ENCODE measurements at regions of chr18 and their contacts with region 1.

Region 1: DNA sequence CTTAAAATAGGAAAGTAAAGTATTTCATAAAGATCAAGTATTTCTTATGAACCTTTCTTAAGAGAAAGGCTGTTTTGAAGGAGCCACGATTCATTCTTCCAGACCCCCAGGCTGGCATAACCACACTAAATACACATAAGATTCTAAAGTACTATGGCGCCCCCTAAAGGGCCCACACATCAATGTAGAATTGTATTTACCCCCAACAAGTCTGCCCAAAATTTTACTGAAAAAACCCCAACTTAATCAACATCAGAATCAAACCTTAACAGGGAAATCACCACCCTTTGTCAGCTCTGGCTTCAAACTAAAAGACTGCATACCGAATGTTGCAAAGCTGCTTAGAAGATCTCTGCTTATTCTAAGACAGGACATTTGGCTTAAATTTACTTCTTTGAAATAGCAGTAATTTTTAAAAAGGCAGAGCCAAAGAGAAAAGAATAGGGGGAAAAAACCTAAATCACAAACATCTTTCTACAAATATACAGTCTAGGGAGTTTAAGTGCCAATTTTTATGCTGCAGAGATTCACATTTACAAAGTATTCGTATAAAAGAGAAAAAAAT is 20.4 kb upstream of the BCL2 start:
- DNase-seq: no peak
- ATAC-seq: no peak
- H3K4me3 ChIP-seq: no peak overlapping the region
- H3K27ac ChIP-seq: no peak overlapping the region
- H3K4me1 ChIP-seq: peaks cover 0 to 16% (median 7%) of the 10 kb centered on the region in 4 donors
- H3K27me3 ChIP-seq: no peaks in the 10 kb centered on the region
- CTCF ChIP-seq: peak; percentile 28 to 54 (median 48)
- POLR2A ChIP-seq: no peak

Region 2: DNA sequence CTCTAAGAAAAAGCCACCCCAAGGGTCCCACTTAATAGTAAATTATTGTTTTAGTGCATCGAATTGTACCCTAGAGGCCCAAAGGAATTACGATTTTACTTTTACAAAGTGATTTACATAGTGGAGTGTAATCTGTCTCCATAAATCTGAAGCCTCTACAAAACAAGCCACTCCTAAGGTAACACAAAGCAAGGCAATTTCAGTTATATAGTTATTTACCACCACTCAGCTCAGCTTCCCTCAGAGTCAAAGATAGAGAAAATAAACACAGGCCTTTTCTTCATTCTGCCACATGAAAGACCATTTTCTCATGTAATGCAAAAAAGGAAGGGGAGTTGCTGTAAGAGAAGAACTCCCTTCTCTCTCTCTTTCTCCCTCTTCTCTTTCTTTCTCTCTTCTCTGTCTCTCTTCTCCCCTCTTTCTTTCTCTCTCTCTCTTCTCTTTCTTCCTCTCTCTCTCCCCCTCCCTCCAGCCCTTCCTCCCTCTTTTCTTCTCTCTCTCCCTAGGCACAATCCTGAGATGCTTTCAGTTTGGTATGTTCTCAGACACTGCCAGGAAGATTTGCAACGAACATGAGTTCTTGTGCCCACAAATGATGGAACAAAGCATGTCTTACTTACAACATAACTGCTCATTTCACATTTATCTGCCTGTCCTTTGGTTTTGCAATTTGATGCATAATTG is 285.0 kb before region 1 on chr18:
- intact Hi-C with region 1: no loop called
- DNase-seq: no peak
- ATAC-seq: no peak
- H3K4me3 ChIP-seq: no peak overlapping the region
- H3K27ac ChIP-seq: no peak overlapping the region
- H3K4me1 ChIP-seq: no peaks in the 10 kb centered on the region
- H3K27me3 ChIP-seq: no peaks in the 10 kb centered on the region
- CTCF ChIP-seq: no peak
- POLR2A ChIP-seq: no peak

Region 3: DNA sequence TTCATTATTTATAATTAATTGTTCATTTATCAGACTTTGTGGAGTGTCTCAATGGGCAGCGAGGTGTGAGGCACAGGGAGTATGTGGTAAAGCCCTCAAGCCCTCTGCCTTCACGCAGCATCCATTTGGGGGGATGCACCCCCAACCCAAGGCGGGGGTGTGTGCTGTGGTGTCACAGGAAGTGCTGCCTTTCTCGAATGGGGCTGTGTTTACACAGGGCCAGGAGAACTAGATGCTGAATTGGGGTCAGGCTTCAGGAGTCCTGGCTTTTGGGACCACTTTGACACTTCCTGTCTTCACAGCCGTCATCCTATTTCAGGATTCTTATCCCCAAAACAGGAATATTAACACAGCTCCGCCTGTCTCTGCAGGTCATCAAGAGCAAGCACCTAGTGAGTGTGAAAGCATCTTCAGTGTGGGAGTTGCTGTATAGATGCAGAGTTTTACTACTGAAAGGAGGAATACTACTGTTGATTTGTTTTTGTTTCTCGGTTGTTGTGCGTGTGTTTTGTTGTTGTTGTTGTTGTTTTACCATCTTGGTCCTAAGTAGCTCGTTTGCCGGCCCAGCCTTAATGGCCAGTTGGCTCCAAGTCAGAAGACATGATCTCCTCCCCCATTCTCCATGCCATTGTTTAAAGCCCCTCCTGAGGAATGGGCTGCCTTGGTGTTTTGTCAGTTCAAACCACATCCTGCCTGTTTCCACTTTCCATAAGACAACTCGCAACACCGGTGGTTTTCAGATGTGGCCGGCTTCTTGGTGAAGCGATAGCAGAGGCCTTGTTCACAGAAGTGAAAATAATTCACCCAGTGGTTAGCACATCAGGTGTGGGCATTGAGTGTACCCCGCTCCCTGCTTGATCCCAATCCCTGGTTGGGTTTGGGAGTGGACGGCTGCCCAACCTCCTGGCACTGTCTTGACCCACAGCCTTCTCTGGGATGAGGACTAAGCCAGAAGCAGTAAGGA is 241.7 kb before region 1 on chr18:
- intact Hi-C with region 1: no loop called
- DNase-seq: no peak
- ATAC-seq: no peak
- H3K4me3 ChIP-seq: no peak overlapping the region
- H3K27ac ChIP-seq: no peak overlapping the region
- H3K4me1 ChIP-seq: peaks cover 0 to 4% (median 0%) of the 10 kb centered on the region in 4 donors
- H3K27me3 ChIP-seq: no peaks in the 10 kb centered on the region
- CTCF ChIP-seq: no peak
- POLR2A ChIP-seq: no peak

Region 4: GRCh38 chr18:63119647-63120046 is 220.4 kb before region 1 on chr18:
- intact Hi-C with region 1: loop called in 1 of 2 experiments (anchors 10 kb)
- DNase-seq: peak in 2 of 3 donors; percentile 53 to 59
- ATAC-seq: peak; percentile 84 to 97 (median 92)
- H3K4me3 ChIP-seq: no peak overlapping the region
- H3K27ac ChIP-seq: no peak overlapping the region
- H3K4me1 ChIP-seq: no peaks in the 10 kb centered on the region
- H3K27me3 ChIP-seq: no peaks in the 10 kb centered on the region
- CTCF ChIP-seq: peak; percentile 49 to 65 (median 57)
- POLR2A ChIP-seq: no peak

Region 5: DNA sequence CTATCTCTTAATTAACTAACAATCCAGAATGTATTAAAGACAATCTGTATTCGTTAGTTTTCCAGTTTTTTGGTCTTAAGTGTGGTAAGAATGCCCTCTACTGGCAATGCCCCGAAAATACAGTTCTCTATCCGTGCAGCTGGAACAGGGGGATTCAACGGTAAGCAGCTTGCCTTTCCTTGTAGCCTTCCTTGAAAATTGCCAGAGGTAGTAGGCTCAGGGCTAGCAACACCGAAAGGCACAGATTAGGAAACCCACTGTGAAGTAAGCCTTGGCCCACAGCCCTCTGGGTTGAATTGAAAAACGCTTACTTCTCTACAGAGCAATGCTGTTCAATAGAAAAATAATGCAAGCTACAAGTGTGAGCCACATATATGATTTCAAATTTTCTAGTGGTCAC is 99.3 kb after region 1 on chr18:
- intact Hi-C with region 1: loop called in 1 of 2 experiments (anchors 10 kb)
- DNase-seq: no peak
- ATAC-seq: peak; percentile 88 to 95 (median 90)
- H3K4me3 ChIP-seq: no peak overlapping the region
- H3K27ac ChIP-seq: no peak overlapping the region
- H3K4me1 ChIP-seq: no peaks in the 10 kb centered on the region
- H3K27me3 ChIP-seq: no peaks in the 10 kb centered on the region
- CTCF ChIP-seq: peak; percentile 68 to 89 (median 79)
- POLR2A ChIP-seq: no peak